H1 (cell line): ENCODE measurements at regions of chr15 and their contacts with region 1.

Region 1: GRCh38 chr15:69475769-69476358 is 23.2 kb downstream of the RPLP1 start:
- DNase-seq: peak; percentile 51 to 95
- H3K4me3 ChIP-seq: no peak overlapping the region
- H3K27ac ChIP-seq: no peak overlapping the region
- H3K4me1 ChIP-seq: no peaks in the 10 kb centered on the region
- H3K27me3 ChIP-seq: no peaks in the 10 kb centered on the region
- CTCF ChIP-seq: peak; percentile 83 to 96 (median 96)
- EP300 ChIP-seq: no peak
- POLR2A ChIP-seq: no peak
- RAD21 ChIP-seq: peak; percentile 95 to 96

Region 2: GRCh38 chr15:69462493-69463181 is 13.2 kb before region 1 on chr15:
- CTCF ChIA-PET with region 1: interaction called, 70 read pairs
- POLR2A ChIA-PET with region 1: interaction called, 207 read pairs
- DNase-seq: peak; percentile 96 to 97
- H3K4me3 ChIP-seq: peak overlapping the region; percentile 39 to 61 (median 48)
- H3K27ac ChIP-seq: peak overlapping the region; percentile 83
- H3K4me1 ChIP-seq: peaks cover 0 to 4% (median 2%) of the 10 kb centered on the region in 4 experiments; a peak in 2 of 7 replicates
- H3K27me3 ChIP-seq: no peaks in the 10 kb centered on the region
- CTCF ChIP-seq: peak; percentile 68 to 92 (median 73)
- EP300 ChIP-seq: peak in 1 of 2 experiments; percentile 9; a peak in 1 of 3 replicates
- POLR2A ChIP-seq: peak; percentile 39 to 85
- RAD21 ChIP-seq: no peak

Region 3: GRCh38 chr15:69502470-69503045 is 26.7 kb after region 1 on chr15:
- CTCF ChIA-PET with region 1: interaction called, 49 read pairs
- POLR2A ChIA-PET with region 1: no interaction called
- DNase-seq: peak in 1 of 2 experiments; percentile 52
- H3K4me3 ChIP-seq: no peak overlapping the region
- H3K27ac ChIP-seq: no peak overlapping the region
- H3K4me1 ChIP-seq: peaks cover 0 to 4% (median 3%) of the 10 kb centered on the region in 4 experiments; a peak in 5 of 7 replicates
- H3K27me3 ChIP-seq: no peaks in the 10 kb centered on the region
- CTCF ChIP-seq: peak in 2 of 3 experiments; percentile 39 to 42; a peak in 3 of 4 replicates
- EP300 ChIP-seq: no peak
- POLR2A ChIP-seq: no peak
- RAD21 ChIP-seq: no peak

Region 4: DNA sequence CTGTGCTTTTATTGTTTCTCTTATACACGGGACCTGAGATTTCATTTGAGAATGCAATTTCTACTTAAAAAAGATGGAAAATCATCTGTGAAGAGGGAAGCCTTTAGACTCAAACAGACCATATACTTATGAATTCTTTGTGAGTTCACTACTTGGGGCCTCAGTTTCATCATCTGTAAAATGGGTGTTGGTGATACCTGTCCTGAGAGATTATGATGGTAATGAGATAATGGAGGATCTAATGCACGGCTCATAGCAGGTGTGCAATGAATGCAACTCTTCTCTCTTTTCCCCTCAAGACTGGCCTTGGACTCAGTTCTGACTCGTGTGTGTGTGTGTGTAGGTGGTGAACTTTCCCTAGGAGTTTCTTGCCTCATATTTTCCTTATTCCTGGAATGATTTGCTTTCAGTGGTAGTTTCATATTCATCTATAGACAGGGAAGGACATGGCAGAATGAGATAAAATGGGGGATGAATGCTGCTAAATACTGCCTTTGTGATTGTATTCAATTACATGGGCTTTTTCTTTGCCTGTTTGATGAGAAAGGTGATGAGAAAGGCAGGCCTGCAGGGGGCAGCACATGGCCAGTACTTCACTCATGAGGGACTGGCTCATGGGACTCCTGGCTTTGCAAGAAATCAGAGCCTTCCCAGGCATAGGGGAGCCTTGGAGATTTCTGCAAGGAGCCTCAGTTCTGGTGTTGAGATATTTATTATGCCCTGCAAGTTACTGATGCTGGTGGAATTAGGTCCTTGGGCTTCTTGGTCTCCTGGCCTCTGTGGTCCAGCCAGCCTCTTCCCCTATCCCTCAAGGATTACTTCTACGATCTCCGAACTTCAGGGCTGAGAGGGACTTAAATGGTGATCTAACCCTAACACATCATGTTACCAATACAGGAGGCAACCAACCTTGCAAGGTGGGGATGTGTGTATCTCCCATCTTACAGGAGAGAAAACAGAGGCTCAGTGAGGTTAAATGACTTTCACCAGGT is 47.4 kb after region 1 on chr15:
- CTCF ChIA-PET with region 1: interaction called, 16 read pairs
- POLR2A ChIA-PET with region 1: no interaction called
- DNase-seq: peak; percentile 33 to 92
- H3K4me3 ChIP-seq: no peak overlapping the region
- H3K27ac ChIP-seq: no peak overlapping the region
- H3K4me1 ChIP-seq: peaks cover 0 to 10% (median 3%) of the 10 kb centered on the region in 4 experiments; a peak in 3 of 7 replicates
- H3K27me3 ChIP-seq: no peaks in the 10 kb centered on the region
- CTCF ChIP-seq: peak; percentile 67 to 88 (median 83)
- EP300 ChIP-seq: no peak
- POLR2A ChIP-seq: no peak
- RAD21 ChIP-seq: peak; percentile 84 to 93

Region 5: DNA sequence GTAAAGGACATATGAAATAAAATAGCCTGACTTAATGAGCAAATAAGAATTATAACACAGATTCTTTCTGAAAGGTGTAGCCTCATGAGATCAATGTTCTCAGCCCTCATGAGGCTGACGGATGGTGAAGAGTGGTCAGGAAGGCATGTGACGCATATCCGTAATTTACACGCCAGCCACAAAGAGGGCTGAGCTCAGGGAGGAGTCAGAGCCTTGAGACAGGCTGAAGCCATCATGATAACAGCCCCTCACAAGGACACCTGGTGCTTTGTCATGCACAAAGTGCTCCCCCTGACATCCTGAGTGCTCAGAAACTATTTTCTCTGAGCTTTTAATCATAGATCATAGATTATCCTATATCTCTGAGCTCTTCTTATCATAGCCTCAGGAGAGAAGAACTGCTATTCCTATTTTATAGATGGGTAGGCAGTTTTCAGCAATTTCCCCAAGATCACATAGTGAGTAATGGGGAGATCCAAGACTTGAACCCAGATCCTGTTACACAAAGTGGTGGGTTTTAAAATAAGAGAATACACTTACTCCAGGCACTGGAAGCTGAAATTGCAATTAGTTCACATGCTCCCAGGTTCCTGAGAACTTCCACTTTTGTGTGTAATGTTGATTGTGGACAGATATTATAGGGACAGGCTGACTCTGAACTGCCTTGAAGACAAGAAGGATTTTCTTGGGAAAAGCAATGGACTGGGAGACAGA is 243.8 kb after region 1 on chr15:
- CTCF ChIA-PET with region 1: interaction called, 39 read pairs
- POLR2A ChIA-PET with region 1: no interaction called
- DNase-seq: no peak
- H3K4me3 ChIP-seq: no peak overlapping the region
- H3K27ac ChIP-seq: no peak overlapping the region
- H3K4me1 ChIP-seq: peaks cover 0 to 3% (median 1%) of the 10 kb centered on the region in 4 experiments; a peak in 1 of 7 replicates
- H3K27me3 ChIP-seq: no peaks in the 10 kb centered on the region
- CTCF ChIP-seq: no peak
- EP300 ChIP-seq: no peak
- POLR2A ChIP-seq: no peak
- RAD21 ChIP-seq: no peak